ENCODE measurements at regions of chr4 and their contacts with region 1.

Region 1: DNA sequence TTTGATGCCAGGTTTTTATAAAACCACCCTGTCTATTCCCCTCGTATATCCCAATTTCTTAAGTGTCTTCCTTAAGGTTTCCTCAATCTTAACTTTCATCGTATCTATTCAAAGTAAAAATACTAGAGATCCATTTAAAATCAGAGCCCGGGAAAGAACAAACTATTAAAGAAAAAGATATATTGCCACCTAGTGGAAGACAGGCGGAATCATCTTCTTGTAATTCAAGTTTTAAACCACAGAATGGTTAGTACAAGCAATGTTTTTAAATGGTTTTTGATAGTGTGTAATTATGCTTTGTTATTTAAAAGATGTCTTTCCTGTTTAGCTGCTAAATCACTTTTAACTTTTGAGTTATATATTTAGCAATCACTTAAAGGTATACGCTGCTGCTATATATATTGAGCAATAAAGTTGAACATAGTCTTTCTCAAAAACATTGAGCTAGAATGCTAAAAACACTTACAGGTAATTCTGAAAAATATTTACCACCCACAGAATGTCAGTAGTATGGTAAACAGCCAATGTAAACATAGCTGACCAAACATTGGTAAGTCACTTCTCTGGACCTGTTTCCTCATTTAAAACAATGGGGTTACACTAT is 18.2 kb downstream of the PRDM8 start:
- DNase-seq: no peak
- H3K4me3 ChIP-seq: no peak overlapping the region
- H3K27ac ChIP-seq: no peak overlapping the region
- H3K4me1 ChIP-seq: no peaks in the 10 kb centered on the region
- H3K27me3 ChIP-seq: no peaks in the 10 kb centered on the region
- CTCF ChIP-seq: peak; percentile 39 to 66 (median 49)

Region 2: GRCh38 chr4:79042079-79042674 is 1173.4 kb before region 1 on chr4:
- intact Hi-C with region 1: loop called (anchors 5 kb)
- DNase-seq: no peak
- H3K4me3 ChIP-seq: no peak overlapping the region
- H3K27ac ChIP-seq: no peak overlapping the region
- H3K4me1 ChIP-seq: no peaks in the 10 kb centered on the region
- H3K27me3 ChIP-seq: no peaks in the 10 kb centered on the region
- CTCF ChIP-seq: peak in 2 of 3 experiments; percentile 39 to 52

Region 3: GRCh38 chr4:80026100-80026499 is 189.5 kb before region 1 on chr4:
- intact Hi-C with region 1: no loop called
- DNase-seq: no peak
- H3K4me3 ChIP-seq: no peak overlapping the region
- H3K27ac ChIP-seq: no peak overlapping the region
- H3K4me1 ChIP-seq: no peaks in the 10 kb centered on the region
- H3K27me3 ChIP-seq: no peaks in the 10 kb centered on the region
- CTCF ChIP-seq: no peak

Region 4: DNA sequence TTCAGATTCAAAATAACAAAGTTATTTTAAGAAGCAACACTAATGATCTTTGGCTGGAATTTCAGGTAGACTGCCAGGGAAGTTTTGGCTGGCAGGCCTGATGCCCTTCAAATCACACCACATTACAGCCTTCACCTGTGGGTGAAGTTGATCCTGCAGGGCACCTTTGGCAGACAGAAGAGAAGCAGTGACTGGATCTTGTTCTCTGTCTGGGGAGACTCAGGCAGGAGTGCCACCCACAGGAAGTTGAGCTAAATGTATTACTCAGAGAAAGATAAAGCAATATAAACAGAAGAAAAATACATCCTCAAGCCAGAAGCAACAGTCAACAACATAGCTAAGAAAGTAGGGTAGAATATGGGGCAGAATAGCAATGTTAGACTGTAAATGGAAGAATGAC is 107.2 kb after region 1 on chr4:
- intact Hi-C with region 1: no loop called
- DNase-seq: no peak
- H3K4me3 ChIP-seq: no peak overlapping the region
- H3K27ac ChIP-seq: no peak overlapping the region
- H3K4me1 ChIP-seq: no peaks in the 10 kb centered on the region
- H3K27me3 ChIP-seq: no peaks in the 10 kb centered on the region
- CTCF ChIP-seq: no peak